Tibial artery (tissue), 4 donors: ENCODE measurements at regions of chr5 and their contacts with region 1.

Region 1: DNA sequence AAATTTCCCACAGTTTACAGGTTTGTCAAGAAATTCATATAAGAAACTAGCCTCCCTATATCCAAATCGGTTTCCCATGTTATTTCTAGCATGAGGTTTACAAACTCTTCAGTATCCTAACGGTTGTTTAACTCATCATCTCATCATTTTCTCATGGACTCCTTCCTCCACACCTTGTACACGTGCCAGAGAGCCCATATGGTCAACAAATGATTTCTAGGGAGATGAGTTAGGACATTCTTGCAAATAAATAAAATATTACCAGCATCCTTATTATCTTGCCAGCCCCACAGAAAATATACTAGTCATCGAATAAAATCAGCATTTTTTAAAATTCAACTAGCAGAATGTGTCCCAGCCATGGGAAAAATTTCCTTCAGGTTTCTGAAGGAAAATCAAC is 285.2 kb downstream of the EBF1 start:
- DNase-seq: no peak
- H3K4me3 ChIP-seq: no peak overlapping the region
- H3K27ac ChIP-seq: no peak overlapping the region
- H3K4me1 ChIP-seq: peaks cover 0 to 23% (median 0%) of the 10 kb centered on the region in 4 donors
- H3K27me3 ChIP-seq: no peaks in the 10 kb centered on the region
- CTCF ChIP-seq: no peak

Region 2: DNA sequence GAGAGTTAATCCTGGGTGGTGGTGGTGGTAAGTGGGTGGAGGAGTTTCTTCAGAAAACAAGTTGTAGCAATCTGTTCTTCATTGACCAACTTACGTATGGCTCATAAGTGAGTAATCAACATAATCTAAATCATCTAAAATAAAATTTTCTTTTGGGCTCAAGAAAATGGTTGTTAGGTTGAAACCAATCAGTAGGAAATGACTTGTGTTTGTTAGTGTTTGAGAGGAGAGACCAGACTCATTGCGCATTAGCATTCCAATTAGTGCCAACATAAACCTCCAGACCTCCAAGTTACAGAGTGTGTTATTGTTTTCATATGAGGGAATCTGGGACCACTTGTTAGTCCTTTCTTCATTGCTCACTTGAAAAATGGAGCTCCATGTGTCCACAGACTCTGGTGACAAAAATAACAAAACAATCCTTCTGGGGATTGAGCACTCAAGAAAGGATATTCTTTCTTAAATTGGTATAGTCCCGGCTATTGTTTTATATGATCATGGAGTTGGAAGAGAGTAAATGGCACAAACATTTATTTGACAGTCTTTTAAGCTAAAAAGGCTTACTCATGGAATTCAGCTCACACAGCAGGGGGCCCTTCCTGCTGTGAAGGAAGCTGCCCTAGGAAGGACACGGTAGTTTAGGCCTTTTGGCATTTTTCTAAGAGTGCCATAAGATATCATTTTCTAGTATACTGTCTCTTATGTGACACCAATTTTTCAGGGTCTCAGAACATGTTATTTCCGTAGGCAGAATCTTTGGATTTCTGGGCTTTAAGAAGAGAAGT is 155.9 kb before region 1 on chr5:
- intact Hi-C with region 1: no loop called
- DNase-seq: no peak
- H3K4me3 ChIP-seq: no peak overlapping the region
- H3K27ac ChIP-seq: no peak overlapping the region
- H3K4me1 ChIP-seq: no peaks in the 10 kb centered on the region
- H3K27me3 ChIP-seq: no peaks in the 10 kb centered on the region
- CTCF ChIP-seq: no peak

Region 3: GRCh38 chr5:158837908-158838307 is 23.4 kb after region 1 on chr5:
- intact Hi-C with region 1: loop called (anchors 2 kb)
- DNase-seq: peak; percentile 60 to 79
- H3K4me3 ChIP-seq: no peak overlapping the region
- H3K27ac ChIP-seq: peak overlapping the region in 1 of 2 donors; percentile 15
- H3K4me1 ChIP-seq: peaks cover 0 to 38% (median 5%) of the 10 kb centered on the region in 4 donors
- H3K27me3 ChIP-seq: no peaks in the 10 kb centered on the region
- CTCF ChIP-seq: no peak

Region 4: DNA sequence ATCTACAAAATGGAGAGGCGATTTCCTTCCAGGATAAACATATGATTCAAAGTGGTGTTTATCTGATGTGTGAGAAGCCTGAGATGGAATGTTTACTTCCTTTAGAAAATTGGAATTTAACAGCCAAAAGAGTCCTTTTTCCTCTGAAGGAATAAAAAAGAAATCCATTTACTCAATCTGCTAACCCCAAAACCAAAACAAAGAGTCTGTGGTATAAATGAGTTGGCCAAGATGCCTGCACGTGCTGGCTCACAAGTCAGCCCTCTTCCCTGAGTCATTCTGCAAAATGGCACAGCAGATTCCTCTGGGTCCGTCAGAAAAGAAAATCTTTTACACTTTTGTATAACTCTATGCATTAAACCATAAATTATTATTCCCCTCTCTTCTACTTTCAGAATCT is 224.4 kb after region 1 on chr5:
- intact Hi-C with region 1: no loop called
- DNase-seq: peak; percentile 70 to 80
- H3K4me3 ChIP-seq: no peak overlapping the region
- H3K27ac ChIP-seq: peak overlapping the region; percentile 67 to 75
- H3K4me1 ChIP-seq: peaks cover 0 to 85% (median 59%) of the 10 kb centered on the region in 4 donors
- H3K27me3 ChIP-seq: no peaks in the 10 kb centered on the region
- CTCF ChIP-seq: no peak